ENCODE measurements at regions of chr10 and their contacts with region 1.

Region 1: DNA sequence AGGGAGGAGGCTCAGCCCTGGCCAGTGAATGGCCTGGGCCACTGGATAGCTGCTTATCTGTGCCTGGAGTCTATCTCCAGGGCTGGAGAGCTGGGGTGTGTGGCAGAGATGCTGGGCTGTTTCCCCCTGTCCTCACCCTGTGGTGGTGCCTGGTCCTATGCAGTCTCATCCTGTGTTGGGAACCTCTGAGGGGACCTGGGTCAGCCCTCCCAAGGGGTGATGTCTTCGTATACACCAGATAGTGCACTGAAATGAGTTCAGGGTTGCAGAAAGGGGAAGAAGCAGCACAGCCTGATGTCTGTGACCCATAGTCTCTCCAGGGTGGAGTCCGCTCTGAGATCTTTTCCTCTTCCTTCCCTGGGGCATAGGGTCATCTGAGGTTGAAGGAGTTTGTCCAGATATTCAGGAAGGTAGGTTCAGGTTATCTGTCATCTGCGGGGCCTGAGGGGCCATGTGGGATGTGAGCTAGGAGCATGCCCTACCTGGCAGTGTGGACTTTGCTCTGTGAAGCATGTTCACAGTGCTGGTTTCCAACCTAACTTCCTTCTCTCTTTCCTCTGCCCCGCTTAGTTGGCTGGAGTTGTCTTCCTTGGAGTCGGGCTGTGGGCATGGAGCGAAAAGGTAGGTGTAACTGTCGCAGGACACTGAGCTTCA is 33.4 kb upstream of the SH2D4B start:
- DNase-seq: no peak
- H3K4me3 Mint-ChIP-seq: no peak overlapping the region
- H3K27ac Mint-ChIP-seq: peak overlapping the region; percentile 74
- H3K4me1 Mint-ChIP-seq: peaks cover 67% of the 10 kb centered on the region
- H3K27me3 Mint-ChIP-seq: no peaks in the 10 kb centered on the region

Region 2: DNA sequence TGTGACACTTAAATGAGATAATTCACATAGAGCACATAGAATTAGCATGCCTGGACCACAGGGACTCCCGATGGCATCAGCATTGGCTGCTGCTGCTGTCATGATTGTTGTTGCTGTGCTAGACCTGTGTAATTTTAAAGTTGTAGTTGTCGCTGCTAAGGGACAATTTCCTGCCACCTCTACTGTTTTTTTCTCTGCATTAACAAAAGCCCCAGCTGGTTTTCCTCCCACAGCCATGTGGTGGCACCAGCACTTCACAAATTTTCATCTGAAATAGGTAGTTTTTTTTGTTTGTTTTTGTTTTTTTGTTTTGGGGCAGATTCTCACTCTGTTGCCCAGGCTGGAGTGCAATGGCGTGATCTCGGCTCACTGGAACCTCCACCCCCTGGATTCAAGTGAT is 121.3 kb before region 1 on chr10:
- CTCF ChIA-PET with region 1: interaction called, 27 read pairs
- POLR2A ChIA-PET with region 1: no interaction called
- DNase-seq: peak; percentile 53
- H3K4me3 Mint-ChIP-seq: no peak overlapping the region
- H3K27ac Mint-ChIP-seq: no peak overlapping the region
- H3K4me1 Mint-ChIP-seq: peaks cover 12% of the 10 kb centered on the region
- H3K27me3 Mint-ChIP-seq: peaks cover 10% of the 10 kb centered on the region

Region 3: GRCh38 chr10:80408242-80409101 is 95.8 kb before region 1 on chr10 and contains the start of gene PRXL2A:
- CTCF ChIA-PET with region 1: interaction called, 15 read pairs
- POLR2A ChIA-PET with region 1: no interaction called
- DNase-seq: peak; percentile 74
- H3K4me3 Mint-ChIP-seq: peak within 1 kb of the TSS; percentile 69
- H3K27ac Mint-ChIP-seq: no peak within 1 kb of the TSS
- H3K4me1 Mint-ChIP-seq: peaks cover 9% of the 10 kb centered on the region
- H3K27me3 Mint-ChIP-seq: peaks cover 22% of the 10 kb centered on the region
- total RNA-seq, gene PRXL2A: 4.5 to 5.2 TPM

Region 4: GRCh38 chr10:80429521-80429966 is 74.7 kb before region 1 on chr10:
- CTCF ChIA-PET with region 1: interaction called, 13 read pairs
- POLR2A ChIA-PET with region 1: no interaction called
- DNase-seq: no peak
- H3K4me3 Mint-ChIP-seq: no peak overlapping the region
- H3K27ac Mint-ChIP-seq: no peak overlapping the region
- H3K4me1 Mint-ChIP-seq: peaks cover 1% of the 10 kb centered on the region
- H3K27me3 Mint-ChIP-seq: no peaks in the 10 kb centered on the region

Region 5: GRCh38 chr10:80487791-80488538 is 16.3 kb before region 1 on chr10:
- CTCF ChIA-PET with region 1: interaction called, 64 read pairs
- POLR2A ChIA-PET with region 1: interaction called, 101 read pairs
- DNase-seq: peak; percentile 86
- H3K4me3 Mint-ChIP-seq: peak overlapping the region; percentile 75
- H3K27ac Mint-ChIP-seq: peak overlapping the region; percentile 91
- H3K4me1 Mint-ChIP-seq: peaks cover 98% of the 10 kb centered on the region
- H3K27me3 Mint-ChIP-seq: no peaks in the 10 kb centered on the region

Region 6: DNA sequence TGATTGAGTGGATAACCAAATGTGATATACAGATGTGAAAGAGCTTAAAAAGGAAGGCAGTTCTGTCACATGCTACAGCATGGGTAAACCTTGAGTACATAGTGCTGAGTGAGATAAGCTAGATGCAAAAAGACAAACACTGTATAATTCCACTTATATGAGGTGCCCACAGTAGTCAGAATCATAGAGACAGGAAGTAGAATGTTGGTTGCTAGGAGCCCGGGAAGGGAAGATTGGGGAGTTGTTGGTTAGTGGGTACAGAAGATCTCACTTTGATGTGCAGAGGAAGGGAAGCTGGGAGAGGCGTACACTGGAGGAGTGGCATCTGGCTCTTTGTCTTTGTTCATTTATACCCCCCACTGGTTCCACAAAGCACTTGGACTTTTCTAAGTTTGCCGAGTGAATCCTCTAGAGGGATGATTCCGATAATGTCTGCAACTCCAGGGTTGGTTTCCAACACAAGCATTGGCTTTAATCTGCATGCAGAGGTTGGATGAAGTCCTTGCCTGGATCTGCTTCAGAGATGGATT is 10.7 kb before region 1 on chr10:
- CTCF ChIA-PET with region 1: interaction called, 64 read pairs
- POLR2A ChIA-PET with region 1: interaction called, 101 read pairs
- DNase-seq: no peak
- H3K4me3 Mint-ChIP-seq: peak overlapping the region; percentile 15
- H3K27ac Mint-ChIP-seq: peak overlapping the region; percentile 76
- H3K4me1 Mint-ChIP-seq: peaks cover 97% of the 10 kb centered on the region
- H3K27me3 Mint-ChIP-seq: no peaks in the 10 kb centered on the region

Region 7: GRCh38 chr10:80518807-80519360 is 14.6 kb after region 1 on chr10:
- CTCF ChIA-PET with region 1: interaction called, 14 read pairs
- POLR2A ChIA-PET with region 1: interaction called, 5 read pairs
- DNase-seq: no peak
- H3K4me3 Mint-ChIP-seq: no peak overlapping the region
- H3K27ac Mint-ChIP-seq: peak overlapping the region; percentile 37
- H3K4me1 Mint-ChIP-seq: peaks cover 28% of the 10 kb centered on the region
- H3K27me3 Mint-ChIP-seq: no peaks in the 10 kb centered on the region

Region 8: GRCh38 chr10:80709866-80710265 is 205.6 kb after region 1 on chr10:
- CTCF ChIA-PET with region 1: no interaction called
- POLR2A ChIA-PET with region 1: no interaction called
- DNase-seq: no peak
- H3K4me3 Mint-ChIP-seq: no peak overlapping the region
- H3K27ac Mint-ChIP-seq: no peak overlapping the region
- H3K4me1 Mint-ChIP-seq: no peaks in the 10 kb centered on the region
- H3K27me3 Mint-ChIP-seq: peaks cover 4% of the 10 kb centered on the region

Measured in activated CD4-positive, alpha-beta memory T cell treated with anti-CD3 and anti-CD28 coated beads, Interleukin-2, amount 10 ng/mL, durations not matched to agents 7 days and 5 days (primary cell).